K562 (cell line): ENCODE measurements at regions of chr7 and their contacts with region 1.

Region 1: DNA sequence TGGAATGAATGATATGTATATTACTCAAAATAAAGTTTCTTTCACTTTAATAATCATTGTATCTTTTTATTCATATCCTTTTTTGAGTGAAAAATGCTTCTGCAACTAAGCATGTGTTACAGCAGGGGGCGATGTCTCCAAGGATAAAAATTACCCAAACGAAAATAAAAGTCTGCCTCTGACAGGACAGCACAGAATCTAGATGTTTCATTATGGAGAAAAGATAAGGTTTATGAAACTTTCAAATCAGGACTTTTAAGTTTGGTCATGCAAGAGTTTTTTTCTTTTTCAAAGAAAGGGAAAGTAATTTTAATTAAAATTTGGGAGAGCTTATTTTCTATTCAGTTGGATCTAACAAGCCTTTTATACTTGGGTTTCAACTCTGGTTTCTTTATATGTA is 48.4 kb downstream of the TES start:
- DNase-seq: peak; percentile 53 to 73 (median 66)
- ATAC-seq: peak; percentile 75
- H3K4me3 ChIP-seq: no peak overlapping the region
- H3K27ac ChIP-seq: no peak overlapping the region
- H3K4me1 ChIP-seq: no peaks in the 10 kb centered on the region
- H3K27me3 ChIP-seq: no peaks in the 10 kb centered on the region
- CTCF ChIP-seq: peak; percentile 78 to 97 (median 78)
- EP300 ChIP-seq: no peak
- POLR2A ChIP-seq: no peak
- RAD21 ChIP-seq: peak; percentile 96 to 99

Region 2: GRCh38 chr7:116173051-116174028 is 85.4 kb before region 1 on chr7:
- CTCF ChIA-PET with region 1: interaction called, 14 read pairs
- POLR2A ChIA-PET with region 1: interaction called, 3 read pairs
- in situ Hi-C with region 1: no loop called
- intact Hi-C with region 1: loop called (anchors 2 kb)
- DNase-seq: peak; percentile 36 to 72 (median 41)
- ATAC-seq: peak; percentile 79
- H3K4me3 ChIP-seq: no peak overlapping the region
- H3K27ac ChIP-seq: no peak overlapping the region
- H3K4me1 ChIP-seq: no peaks in the 10 kb centered on the region
- H3K27me3 ChIP-seq: no peaks in the 10 kb centered on the region
- CTCF ChIP-seq: peak; percentile 48 to 89 (median 54); a peak in 5 of 6 replicates
- EP300 ChIP-seq: no peak
- POLR2A ChIP-seq: no peak
- RAD21 ChIP-seq: peak; percentile 95 to 96

Region 3: DNA sequence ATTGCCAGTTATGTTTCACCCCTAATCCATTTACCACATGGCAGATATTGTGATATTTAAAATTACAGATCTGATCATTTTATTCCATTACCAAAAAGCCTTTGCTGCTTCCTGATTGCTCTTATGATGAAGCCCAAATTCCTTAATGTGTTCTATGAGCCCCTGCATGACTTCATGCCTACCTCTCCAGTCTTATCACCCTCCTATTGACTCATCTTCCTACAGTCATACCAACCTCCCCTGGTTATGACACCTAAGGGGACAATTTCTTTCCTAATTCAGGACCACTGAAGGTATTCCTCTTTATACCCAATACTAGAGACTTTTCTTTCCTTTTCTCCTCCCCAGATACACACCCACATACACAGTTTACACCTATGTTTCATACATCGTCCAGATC is 12.4 kb before region 1 on chr7:
- CTCF ChIA-PET with region 1: no interaction called
- POLR2A ChIA-PET with region 1: no interaction called
- in situ Hi-C with region 1: no loop called
- intact Hi-C with region 1: no loop called
- DNase-seq: no peak
- ATAC-seq: no peak
- H3K4me3 ChIP-seq: no peak overlapping the region
- H3K27ac ChIP-seq: no peak overlapping the region
- H3K4me1 ChIP-seq: no peaks in the 10 kb centered on the region
- H3K27me3 ChIP-seq: no peaks in the 10 kb centered on the region
- CTCF ChIP-seq: no peak
- EP300 ChIP-seq: no peak
- POLR2A ChIP-seq: no peak
- RAD21 ChIP-seq: no peak

Region 4: GRCh38 chr7:116340943-116341907 is 82.5 kb after region 1 on chr7:
- CTCF ChIA-PET with region 1: no interaction called
- POLR2A ChIA-PET with region 1: no interaction called
- in situ Hi-C with region 1: no loop called
- intact Hi-C with region 1: loop called (anchors 1 kb)
- DNase-seq: peak in 2 of 4 experiments; percentile 32 to 53
- ATAC-seq: peak; percentile 96
- H3K4me3 ChIP-seq: no peak overlapping the region
- H3K27ac ChIP-seq: no peak overlapping the region
- H3K4me1 ChIP-seq: peaks cover 0 to 16% of the 10 kb centered on the region in 2 experiments; a peak in 3 of 5 replicates
- H3K27me3 ChIP-seq: no peaks in the 10 kb centered on the region
- CTCF ChIP-seq: peak; percentile 57 to 59 (median 57)
- EP300 ChIP-seq: no peak
- POLR2A ChIP-seq: no peak
- RAD21 ChIP-seq: peak; percentile 74 to 79

Region 5: DNA sequence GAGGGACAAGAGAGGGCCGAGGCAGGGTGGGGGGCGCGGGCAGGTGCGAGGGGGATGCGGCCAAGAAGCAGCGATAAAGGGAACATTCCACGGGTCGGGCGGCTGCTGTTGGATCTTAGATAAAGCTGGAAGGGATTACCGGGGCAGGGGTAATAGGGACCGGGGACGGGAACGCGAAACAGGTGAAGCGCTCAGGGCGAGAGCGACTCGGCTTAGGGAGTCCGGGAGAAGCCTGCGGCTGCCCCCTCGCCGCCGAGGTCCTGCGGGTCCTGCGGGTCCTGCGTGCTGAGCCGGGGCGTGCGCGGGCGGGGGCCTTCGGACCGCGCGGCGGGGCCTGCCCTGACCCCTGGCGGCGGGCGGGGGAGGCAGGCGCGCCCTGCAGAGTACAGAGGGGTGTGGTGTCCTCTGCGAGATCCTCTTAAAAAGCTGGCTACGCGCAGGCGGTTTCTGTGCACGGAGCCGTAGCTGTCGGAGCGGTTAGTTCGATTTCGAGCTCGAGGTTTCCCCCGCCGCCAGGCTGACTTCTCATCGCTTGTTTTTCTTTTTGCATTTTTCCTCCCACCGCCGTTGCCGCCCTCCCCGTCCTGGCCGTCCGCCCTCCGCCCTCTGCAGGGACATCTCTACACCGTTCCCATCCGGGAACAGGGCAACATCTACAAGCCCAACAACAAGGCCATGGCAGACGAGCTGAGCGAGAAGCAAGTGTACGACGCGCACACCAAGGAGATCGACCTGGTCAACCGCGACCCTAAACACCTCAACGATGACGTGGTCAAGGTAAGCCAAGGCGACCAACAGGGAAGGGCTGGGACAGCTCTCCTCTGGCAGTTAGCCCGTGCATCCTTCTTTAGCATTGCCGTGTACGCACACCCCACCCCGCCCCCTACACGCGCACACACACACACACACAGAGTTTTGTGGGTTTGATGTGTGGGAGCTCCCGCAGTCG is 267.5 kb after region 1 on chr7:
- CTCF ChIA-PET with region 1: interaction called, 14 read pairs
- POLR2A ChIA-PET with region 1: interaction called, 4 read pairs
- in situ Hi-C with region 1: no loop called
- intact Hi-C with region 1: loop called (anchors 2 kb)
- DNase-seq: peak; percentile 88 to 94 (median 94)
- ATAC-seq: peak; percentile 97
- H3K4me3 ChIP-seq: peak overlapping the region; percentile 50
- H3K27ac ChIP-seq: no peak overlapping the region
- H3K4me1 ChIP-seq: peaks cover 21 to 24% of the 10 kb centered on the region in 2 experiments
- H3K27me3 ChIP-seq: peaks cover 0 to 7% of the 10 kb centered on the region in 2 experiments; a peak in 2 of 5 replicates
- CTCF ChIP-seq: peak; percentile 77 to 91 (median 80)
- EP300 ChIP-seq: no peak
- POLR2A ChIP-seq: no peak
- RAD21 ChIP-seq: peak; percentile 96 to 98

Region 6: GRCh38 chr7:116576350-116577319 is 317.9 kb after region 1 on chr7:
- CTCF ChIA-PET with region 1: no interaction called
- POLR2A ChIA-PET with region 1: no interaction called
- in situ Hi-C with region 1: loop called (anchors 5 kb)
- intact Hi-C with region 1: no loop called
- DNase-seq: peak in 1 of 4 experiments; percentile 15
- ATAC-seq: peak; percentile 25; the same call in 1 of the 3 replicates
- H3K4me3 ChIP-seq: no peak overlapping the region
- H3K27ac ChIP-seq: no peak overlapping the region
- H3K4me1 ChIP-seq: no peaks in the 10 kb centered on the region
- H3K27me3 ChIP-seq: peaks cover 0 to 3% of the 10 kb centered on the region in 2 experiments; a peak in 1 of 5 replicates
- CTCF ChIP-seq: no peak
- EP300 ChIP-seq: no peak
- POLR2A ChIP-seq: no peak
- RAD21 ChIP-seq: no peak

Region 7: DNA sequence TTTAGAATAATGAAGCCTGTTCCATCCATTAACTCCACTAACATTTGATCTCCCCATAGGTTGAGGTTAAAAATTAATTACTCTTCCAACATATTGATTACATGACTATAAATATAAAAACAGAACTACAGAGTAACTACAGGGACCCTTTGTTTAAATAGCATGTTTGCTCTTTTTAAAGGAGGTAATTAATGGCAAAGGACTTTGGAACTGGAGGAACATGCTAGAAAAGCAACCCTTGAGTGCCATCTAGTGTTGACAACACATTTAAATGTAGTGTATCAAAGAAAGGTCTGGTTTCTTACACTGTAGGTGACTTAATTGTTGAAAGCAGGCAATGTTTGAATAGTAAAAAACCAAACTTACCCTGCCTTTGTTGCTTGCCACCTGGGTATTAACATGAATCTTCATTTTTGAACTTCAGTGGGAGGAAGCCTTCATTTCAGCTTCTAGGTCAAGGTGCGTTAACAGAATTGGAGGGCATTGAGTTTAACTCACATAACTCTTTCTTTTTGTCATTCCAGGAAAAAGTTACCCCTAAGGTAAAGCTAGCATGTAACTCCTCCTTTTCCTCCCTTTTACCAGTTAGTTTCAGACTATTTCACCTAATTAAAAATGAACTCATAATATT is 551.0 kb after region 1 on chr7:
- CTCF ChIA-PET with region 1: interaction called, 16 read pairs
- POLR2A ChIA-PET with region 1: interaction called, 3 read pairs
- in situ Hi-C with region 1: loop called (anchors 5 kb)
- intact Hi-C with region 1: loop called (anchors 2 kb)
- DNase-seq: peak; percentile 41 to 82 (median 54)
- ATAC-seq: peak; percentile 96
- H3K4me3 ChIP-seq: no peak overlapping the region
- H3K27ac ChIP-seq: no peak overlapping the region
- H3K4me1 ChIP-seq: no peaks in the 10 kb centered on the region
- H3K27me3 ChIP-seq: peaks cover 9 to 19% of the 10 kb centered on the region in 2 experiments; a peak in 4 of 5 replicates
- CTCF ChIP-seq: peak; percentile 65 to 89 (median 71)
- EP300 ChIP-seq: no peak
- POLR2A ChIP-seq: no peak
- RAD21 ChIP-seq: peak; percentile 92 to 97